GM10248 (cell line): ENCODE measurements at regions of chr2 and their contacts with region 1.

Region 1: DNA sequence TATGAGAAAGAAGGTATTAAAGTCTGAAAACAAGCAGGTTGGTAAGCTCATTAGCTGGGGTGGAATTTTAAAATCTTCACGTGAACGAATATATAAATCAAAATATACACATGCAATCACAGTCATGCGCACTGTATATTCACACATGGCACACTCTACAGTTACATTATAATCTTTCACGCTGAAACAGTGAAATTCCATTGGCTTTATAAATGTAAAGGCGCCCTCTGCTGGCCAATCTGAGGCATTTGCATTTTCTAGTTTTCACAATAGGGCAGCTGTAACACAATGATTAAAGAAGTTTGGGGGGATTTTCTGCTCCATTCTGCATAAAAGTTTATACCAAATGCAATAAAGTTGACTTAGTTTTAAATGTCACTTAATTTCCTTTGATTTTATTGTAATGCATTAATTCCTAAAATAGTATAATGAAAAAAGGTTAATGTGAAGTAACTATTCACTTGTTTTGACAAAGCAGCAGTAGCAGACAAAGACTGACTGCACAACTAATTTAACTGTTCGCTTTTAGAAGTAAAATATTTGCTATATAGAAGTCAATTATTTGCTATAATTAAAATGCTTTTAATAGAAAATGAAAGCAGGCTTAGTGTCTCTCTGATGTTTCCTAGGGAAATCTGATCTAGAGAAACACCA is 17.2 kb downstream of the IFIH1 start:
- DNase-seq: peak; percentile 27
- CTCF ChIP-seq: peak; percentile 83

Region 2: GRCh38 chr2:162153608-162154224 is 147.6 kb before region 1 on chr2:
- CTCF ChIA-PET with region 1: interaction called, 17 read pairs
- POLR2A ChIA-PET with region 1: no interaction called
- DNase-seq: peak; percentile 36
- CTCF ChIP-seq: peak; percentile 84

Region 3: DNA sequence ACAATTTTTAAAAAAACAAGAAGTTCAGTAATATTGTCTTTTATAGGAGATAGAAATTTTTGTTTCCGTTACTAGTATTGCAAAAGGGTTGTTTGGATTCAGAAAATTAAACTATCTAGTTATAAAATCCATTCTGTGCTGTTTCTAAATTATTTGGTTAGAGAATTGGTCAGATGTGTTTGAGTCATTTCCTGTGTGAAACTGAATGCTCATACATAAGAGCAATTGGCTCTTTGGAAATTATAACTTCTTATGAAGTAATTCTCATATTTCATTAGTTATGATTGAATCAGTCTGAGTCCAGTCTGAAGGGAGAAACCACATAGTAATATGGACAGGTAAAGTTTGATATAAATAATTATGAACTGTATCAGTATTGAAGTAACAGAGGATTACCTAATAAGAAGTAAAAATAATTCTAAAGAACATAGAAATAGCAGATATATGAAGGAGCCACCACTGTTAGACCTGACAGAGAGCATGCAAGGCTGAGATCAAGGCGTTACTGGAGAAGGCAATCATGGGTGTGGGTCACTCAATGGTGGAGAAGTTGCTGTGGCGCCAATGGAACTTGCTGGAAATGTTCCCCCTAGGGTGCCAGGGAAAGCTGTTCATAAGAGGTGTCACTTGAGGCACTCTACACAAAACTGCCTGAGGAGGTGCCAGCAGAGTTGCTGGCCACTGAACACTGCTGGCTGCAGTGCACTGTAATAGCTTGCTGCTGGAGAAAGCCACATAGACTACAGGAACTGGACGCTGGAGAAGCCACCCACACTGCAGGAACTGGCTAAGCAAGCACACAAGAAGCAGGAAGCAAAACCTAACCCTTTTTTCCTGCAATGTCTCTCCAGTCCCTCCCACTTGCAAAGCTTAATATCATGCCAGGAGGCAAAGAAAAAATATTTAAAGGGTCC is 40.0 kb before region 1 on chr2:
- CTCF ChIA-PET with region 1: interaction called, 10 read pairs
- POLR2A ChIA-PET with region 1: no interaction called
- DNase-seq: peak; percentile 9
- CTCF ChIP-seq: no peak

Region 4: GRCh38 chr2:162282765-162283425 is 18.4 kb before region 1 on chr2:
- CTCF ChIA-PET with region 1: interaction called, 71 read pairs
- POLR2A ChIA-PET with region 1: no interaction called
- DNase-seq: no peak
- CTCF ChIP-seq: no peak

Region 5: DNA sequence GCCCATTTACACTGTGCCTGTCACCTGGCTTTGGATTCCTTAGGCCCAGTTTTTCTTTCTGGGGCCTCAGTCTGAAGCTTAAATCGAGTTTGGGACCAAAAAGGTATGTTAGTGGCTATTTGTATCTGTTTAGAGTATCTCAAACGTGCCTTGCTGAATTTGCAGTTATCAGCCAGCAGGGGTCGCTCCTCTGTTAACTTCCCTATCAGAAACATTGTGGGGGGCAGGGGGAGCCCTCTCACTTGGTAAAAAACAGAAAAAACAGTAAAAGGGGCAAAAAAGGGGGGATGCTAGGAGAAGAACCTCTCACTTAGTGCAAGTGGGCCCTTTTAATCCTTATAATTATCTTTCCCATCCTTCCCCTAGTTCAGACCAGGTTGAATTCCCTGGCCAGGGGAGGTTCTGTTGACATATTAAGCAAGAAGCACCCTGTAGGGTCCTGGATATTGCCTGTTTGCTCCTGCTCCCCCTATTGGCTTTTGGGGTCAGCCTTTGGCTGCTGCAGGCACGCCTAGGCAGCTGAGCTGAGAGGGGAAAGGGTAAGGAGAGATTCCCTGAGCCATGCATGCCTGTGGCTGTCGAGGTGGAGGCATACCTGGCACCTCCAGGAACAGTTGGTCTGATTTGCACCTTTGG is 26.0 kb after region 1 on chr2:
- CTCF ChIA-PET with region 1: interaction called, 11 read pairs
- POLR2A ChIA-PET with region 1: no interaction called
- DNase-seq: peak; percentile 13
- CTCF ChIP-seq: peak; percentile 39